ENCODE measurements at regions of chr13 and their contacts with region 1.

Region 1: GRCh38 chr13:26985285-26985878 is 186.2 kb downstream of the USP12 start:
- DNase-seq: peak; percentile 82
- H3K4me3 ChIP-seq: no peak overlapping the region
- H3K27ac ChIP-seq: peak overlapping the region; percentile 87 to 93 (median 90)
- H3K4me1 ChIP-seq: peaks cover 18 to 48% (median 33%) of the 10 kb centered on the region in 4 donors
- H3K27me3 ChIP-seq: no peaks in the 10 kb centered on the region
- CTCF ChIP-seq: peak; percentile 76 to 95 (median 78)
- EP300 ChIP-seq: no peak
- POLR2A ChIP-seq: no peak

Region 2: DNA sequence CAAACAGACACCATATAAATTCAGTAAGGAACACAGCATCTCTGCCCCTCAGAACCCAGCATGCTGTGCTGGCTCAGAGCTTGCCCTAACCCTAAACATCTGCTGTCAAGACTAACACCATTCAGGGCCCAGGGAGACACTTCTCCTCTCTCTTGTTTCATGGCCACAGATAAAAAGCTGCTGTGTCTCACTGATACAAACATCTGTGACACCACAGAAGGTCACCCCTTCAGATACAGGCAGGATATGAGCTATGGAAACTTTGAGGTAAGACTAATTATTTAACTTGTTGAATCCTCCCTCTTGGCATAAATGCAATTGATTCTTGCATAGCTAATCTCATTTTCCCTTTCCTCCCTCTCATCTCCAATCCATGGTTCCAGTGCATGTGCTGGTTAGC is 163.2 kb before region 1 on chr13:
- in situ Hi-C with region 1: no loop called
- intact Hi-C with region 1: no loop called
- DNase-seq: no peak
- H3K4me3 ChIP-seq: no peak overlapping the region
- H3K27ac ChIP-seq: no peak overlapping the region
- H3K4me1 ChIP-seq: no peaks in the 10 kb centered on the region
- H3K27me3 ChIP-seq: no peaks in the 10 kb centered on the region
- CTCF ChIP-seq: no peak
- EP300 ChIP-seq: no peak
- POLR2A ChIP-seq: no peak

Region 3: DNA sequence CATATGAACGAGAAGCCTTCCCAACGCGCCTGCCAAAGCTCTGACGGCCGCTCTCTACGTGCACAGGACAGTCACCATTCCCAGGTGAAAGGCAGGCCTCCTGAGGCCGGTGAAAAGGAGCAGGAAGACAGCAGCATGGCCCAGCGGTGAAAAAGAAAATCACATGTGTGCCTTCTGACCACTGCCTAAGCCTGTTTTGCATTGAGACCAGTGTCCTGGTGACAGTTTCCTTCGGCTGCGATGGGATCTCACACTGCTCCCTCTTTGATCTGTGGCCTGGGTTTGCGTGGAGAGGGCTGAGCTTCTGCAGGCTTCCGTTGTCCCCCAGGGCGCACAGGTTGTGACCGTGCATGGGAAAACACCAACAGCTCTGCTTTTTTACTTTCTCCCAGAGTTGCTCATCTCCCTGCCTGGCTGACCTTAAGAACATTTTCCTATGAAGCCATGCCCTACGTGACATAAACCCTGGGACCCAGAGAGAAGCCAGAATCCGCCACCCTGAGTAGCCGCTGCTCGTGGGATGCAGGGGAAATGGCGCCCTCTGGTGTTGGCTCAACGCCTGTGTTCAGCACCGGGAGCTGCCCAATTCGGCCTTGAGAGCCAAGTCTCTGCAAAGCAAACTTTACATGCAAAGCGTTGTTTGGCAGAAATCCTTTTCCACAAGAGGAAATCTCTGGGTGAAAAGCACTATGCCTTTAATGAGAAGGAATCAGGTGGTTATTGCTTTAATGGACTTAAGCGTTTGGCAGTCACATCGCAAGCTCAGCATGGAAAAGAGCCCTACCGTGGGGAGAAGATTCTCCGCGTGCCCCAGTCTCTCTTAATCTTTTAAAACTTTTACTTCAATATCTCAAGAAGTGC is 112.6 kb before region 1 on chr13:
- in situ Hi-C with region 1: no loop called
- intact Hi-C with region 1: no loop called
- DNase-seq: peak; percentile 33
- H3K4me3 ChIP-seq: no peak overlapping the region
- H3K27ac ChIP-seq: no peak overlapping the region
- H3K4me1 ChIP-seq: no peaks in the 10 kb centered on the region
- H3K27me3 ChIP-seq: peaks cover 3% of the 10 kb centered on the region
- CTCF ChIP-seq: peak; percentile 38 to 65 (median 45)
- EP300 ChIP-seq: no peak
- POLR2A ChIP-seq: no peak

Region 4: DNA sequence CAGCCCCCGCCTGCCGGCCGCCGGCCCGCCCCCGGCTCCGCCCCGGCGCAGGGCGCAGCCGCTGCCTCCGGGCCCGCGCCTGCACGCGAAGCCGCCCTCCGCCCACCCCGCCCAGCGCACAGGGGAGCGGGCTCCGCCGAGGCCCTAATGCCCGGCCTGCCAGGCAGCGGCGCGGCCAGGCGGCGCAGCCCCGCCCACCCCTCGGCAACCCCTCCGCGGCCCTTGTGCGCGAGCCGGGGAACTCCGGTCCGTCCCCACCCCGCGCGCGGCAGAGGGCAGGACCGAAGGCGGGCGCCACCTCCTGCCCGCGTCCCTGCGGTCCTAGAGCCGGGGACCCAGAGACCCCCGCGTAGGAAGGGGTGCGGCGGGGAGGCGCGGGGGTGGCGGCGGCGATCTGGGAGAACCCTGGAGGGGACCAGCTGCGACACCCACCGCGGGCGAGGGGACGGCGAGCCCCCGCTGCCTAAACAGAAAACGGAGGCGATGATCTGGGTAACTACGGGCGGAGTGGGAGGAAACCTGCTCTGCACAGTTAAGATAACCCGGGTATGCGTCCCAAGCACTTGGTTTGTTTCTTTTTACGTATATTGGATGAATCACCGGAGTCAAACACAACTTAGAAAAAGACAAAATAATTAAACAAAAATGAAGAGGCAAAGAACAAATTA is 186.6 kb after region 1 on chr13:
- in situ Hi-C with region 1: loop called in 1 of 4 experiments (anchors 25 kb)
- intact Hi-C with region 1: no loop called
- DNase-seq: peak; percentile 96
- H3K4me3 ChIP-seq: peak overlapping the region; percentile 72 to 92 (median 80)
- H3K27ac ChIP-seq: peak overlapping the region; percentile 93 to 97 (median 96)
- H3K4me1 ChIP-seq: peaks cover 22 to 46% (median 32%) of the 10 kb centered on the region in 4 donors
- H3K27me3 ChIP-seq: no peaks in the 10 kb centered on the region
- CTCF ChIP-seq: peak in 1 of 5 experiments; percentile 10
- EP300 ChIP-seq: no peak
- POLR2A ChIP-seq: peak; percentile 26

Region 5: DNA sequence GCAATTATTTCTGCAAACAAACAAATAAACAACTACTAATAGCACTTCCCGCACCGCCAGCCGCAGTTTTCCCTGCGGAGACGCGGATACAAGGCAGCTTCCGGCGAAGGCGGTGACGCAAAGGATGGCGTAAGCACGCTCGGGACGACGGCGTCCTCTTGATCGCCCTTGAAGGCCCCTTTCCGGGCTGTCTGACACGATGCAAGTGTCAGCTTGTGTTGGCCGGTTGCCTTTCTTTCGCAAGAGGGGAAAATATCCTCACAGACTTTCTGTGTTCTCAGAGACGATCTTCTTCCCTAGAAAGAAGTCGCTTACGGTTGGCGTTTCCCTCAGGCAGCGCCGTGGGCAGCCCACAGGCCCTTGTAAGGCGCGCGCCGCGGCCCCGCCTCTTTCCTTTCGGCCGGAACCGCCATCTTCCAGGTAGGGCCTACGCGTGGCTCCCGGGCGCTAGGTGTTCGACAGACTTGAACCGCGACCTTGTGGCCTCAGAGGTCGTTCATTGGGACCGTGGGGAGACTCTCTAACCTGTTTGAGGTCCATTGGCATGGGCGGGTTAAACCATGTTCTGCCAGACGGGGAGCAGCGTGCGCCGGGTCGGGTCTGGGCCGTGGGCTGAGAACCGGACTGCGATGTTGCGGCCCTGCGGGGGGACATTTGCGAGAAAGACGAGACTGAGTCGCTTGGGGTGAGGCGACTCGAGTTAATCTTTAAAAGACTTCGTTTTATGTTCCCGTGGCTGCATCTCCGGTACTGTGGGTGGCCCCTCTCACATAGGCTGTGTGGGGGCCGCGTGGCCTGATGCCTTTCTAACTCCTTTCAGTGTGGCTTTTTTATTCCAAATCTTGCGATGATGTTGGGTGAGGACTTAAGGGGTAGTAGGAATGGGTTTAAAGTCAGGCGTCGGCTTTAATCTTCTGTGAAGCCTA is 266.0 kb after region 1 on chr13 and contains the start of gene RPL21:
- in situ Hi-C with region 1: loop called in 1 of 4 experiments (anchors 25 kb)
- intact Hi-C with region 1: loop called (anchors 5 kb)
- DNase-seq: peak; percentile 97
- H3K4me3 ChIP-seq: peak within 1 kb of the TSS; percentile 54 to 91 (median 80)
- H3K27ac ChIP-seq: peak within 1 kb of the TSS; percentile 93 to 98 (median 95)
- H3K4me1 ChIP-seq: peaks cover 18 to 38% (median 20%) of the 10 kb centered on the region in 4 donors
- H3K27me3 ChIP-seq: no peaks in the 10 kb centered on the region
- CTCF ChIP-seq: no peak
- EP300 ChIP-seq: peak; percentile 65
- POLR2A ChIP-seq: peak; percentile 93
- total RNA-seq, gene RPL21: 71.8 to 702 (median 370) TPM

Region 6: DNA sequence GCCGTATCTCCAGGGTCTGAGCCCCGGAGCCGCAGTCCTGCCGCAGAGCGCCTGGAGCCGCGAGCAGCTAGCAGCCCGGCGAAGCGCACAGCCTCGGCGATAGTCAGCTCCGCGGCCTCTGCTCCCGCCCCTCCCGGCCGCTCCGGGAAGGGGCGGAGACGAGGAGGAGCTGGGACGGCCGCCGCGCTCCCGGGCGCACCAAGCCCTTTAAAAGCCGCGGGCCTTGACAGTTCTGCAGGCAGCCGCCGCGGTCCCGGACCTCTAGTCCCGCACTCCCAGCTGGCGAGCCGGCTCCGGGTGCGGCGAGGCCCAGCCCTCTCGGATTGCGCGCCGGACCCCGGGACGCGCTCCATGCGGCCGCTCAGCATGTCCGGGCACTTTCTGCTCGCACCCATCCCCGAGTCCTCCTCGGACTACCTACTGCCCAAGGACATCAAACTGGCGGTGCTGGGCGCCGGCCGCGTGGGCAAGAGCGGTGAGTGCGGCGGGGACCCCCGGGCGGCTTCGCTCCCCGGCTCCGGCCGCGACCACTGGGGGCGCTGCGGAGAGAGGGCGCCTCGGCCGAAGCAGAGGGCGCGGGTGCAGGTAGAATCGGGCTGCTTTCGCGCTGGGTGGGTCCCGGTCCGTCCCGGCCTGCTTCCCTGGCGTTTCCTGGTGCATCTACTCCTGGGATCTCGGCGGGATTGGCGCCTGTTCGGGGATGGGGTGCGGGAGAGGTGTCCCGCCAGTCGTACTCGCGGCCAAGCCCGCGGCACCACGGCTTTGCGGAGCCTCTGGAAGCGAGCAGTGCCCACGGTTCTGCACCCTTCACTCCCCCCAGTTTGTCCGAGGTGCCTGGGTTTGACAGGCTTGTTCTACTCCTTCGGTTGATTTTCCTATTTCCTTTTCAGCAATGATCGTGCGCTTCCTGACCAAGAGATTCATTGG is 285.5 kb after region 1 on chr13 and contains the start of gene RASL11A:
- in situ Hi-C with region 1: loop called in 2 of 4 experiments (anchors 10 to 25 kb)
- intact Hi-C with region 1: loop called (anchors 5 kb)
- DNase-seq: peak; percentile 90
- H3K4me3 ChIP-seq: peak within 1 kb of the TSS; percentile 64 to 82 (median 66)
- H3K27ac ChIP-seq: peak within 1 kb of the TSS; percentile 91 to 97 (median 94)
- H3K4me1 ChIP-seq: peaks cover 7 to 37% (median 14%) of the 10 kb centered on the region in 4 donors
- H3K27me3 ChIP-seq: no peaks in the 10 kb centered on the region
- CTCF ChIP-seq: peak; percentile 93 to 99 (median 96)
- EP300 ChIP-seq: no peak
- POLR2A ChIP-seq: peak; percentile 95
- total RNA-seq, gene RASL11A: 18.7 to 37.7 (median 28.9) TPM

Region 7: DNA sequence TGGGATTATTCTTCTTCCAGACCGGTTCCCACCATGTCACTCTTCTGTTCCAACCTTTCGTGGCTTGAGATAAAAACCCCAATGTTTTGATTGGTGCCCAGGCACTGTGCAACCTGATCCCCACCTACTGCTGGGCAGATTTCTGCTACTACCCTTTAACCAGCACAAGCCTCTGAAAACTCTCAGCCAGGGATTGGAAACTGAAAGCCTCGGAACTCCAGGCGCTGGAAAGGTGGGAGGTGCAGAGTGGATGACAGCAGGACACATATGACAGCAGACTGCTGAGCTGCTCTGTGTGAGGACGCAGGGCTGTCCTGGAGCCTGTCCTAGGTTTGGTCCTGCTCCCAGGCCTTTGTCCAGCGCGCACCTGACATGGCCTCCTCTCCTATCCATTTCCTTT is 370.5 kb after region 1 on chr13:
- in situ Hi-C with region 1: loop called (anchors 5 to 10 kb)
- intact Hi-C with region 1: loop called (anchors 2 kb)
- DNase-seq: no peak
- H3K4me3 ChIP-seq: no peak overlapping the region
- H3K27ac ChIP-seq: no peak overlapping the region
- H3K4me1 ChIP-seq: peaks cover 0 to 21% (median 4%) of the 10 kb centered on the region in 4 donors
- H3K27me3 ChIP-seq: peaks cover 5% of the 10 kb centered on the region
- CTCF ChIP-seq: no peak
- EP300 ChIP-seq: no peak
- POLR2A ChIP-seq: no peak

Region 8: GRCh38 chr13:27362064-27362883 is 376.9 kb after region 1 on chr13:
- in situ Hi-C with region 1: loop called (anchors 5 to 10 kb)
- intact Hi-C with region 1: loop called (anchors 2 kb)
- DNase-seq: peak; percentile 92
- H3K4me3 ChIP-seq: peak overlapping the region; percentile 28 to 50 (median 32)
- H3K27ac ChIP-seq: peak overlapping the region; percentile 11 to 52 (median 21)
- H3K4me1 ChIP-seq: peaks cover 0 to 17% (median 9%) of the 10 kb centered on the region in 4 donors
- H3K27me3 ChIP-seq: peaks cover 5% of the 10 kb centered on the region
- CTCF ChIP-seq: peak; percentile 90 to 96 (median 94)
- EP300 ChIP-seq: no peak
- POLR2A ChIP-seq: no peak

Region 9: DNA sequence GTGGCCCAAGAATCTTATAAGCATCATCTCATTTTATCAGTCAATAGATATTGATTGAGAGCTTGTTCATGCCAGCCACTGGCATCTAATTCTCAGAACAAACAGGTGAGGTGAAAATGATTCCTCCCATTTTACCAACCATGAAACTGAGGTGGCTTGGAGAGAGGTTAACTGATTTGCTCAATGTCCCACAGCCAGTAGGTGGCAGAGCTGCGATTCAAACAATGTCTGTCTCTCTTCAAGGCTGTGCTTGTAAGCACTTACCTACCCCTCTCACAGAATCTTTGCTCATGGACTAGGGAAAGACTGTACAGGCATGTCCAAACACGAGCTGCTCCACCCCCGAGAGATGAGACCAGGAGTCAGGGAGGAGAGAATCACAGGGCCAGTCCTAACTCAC is 785.4 kb after region 1 on chr13:
- in situ Hi-C with region 1: no loop called
- intact Hi-C with region 1: no loop called
- DNase-seq: peak; percentile 36
- H3K4me3 ChIP-seq: no peak overlapping the region
- H3K27ac ChIP-seq: no peak overlapping the region
- H3K4me1 ChIP-seq: no peaks in the 10 kb centered on the region
- H3K27me3 ChIP-seq: peaks cover 24% of the 10 kb centered on the region
- CTCF ChIP-seq: peak in 3 of 5 experiments; percentile 26 to 30 (median 30)
- EP300 ChIP-seq: no peak
- POLR2A ChIP-seq: no peak

Region 10: DNA sequence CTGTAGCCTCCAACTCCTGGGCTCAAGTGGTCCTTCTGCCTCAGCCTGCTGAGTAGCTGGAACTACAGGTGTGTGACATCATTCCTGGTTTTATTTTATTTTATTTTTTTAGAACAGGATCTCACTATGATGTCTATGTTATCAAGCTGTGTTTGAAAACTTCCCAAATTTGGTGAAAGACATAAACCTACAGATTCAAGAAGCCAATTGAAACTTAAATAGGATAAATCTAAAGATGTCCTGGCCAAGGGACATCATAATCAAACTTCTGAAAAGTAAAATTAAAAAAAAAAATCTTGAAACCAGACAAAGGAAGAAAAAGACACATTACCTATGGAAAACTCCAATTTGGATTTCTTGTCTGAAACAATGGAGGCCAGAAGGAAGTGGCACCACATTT is 911.3 kb after region 1 on chr13:
- in situ Hi-C with region 1: no loop called
- intact Hi-C with region 1: no loop called
- DNase-seq: no peak
- H3K4me3 ChIP-seq: no peak overlapping the region
- H3K27ac ChIP-seq: no peak overlapping the region
- H3K4me1 ChIP-seq: no peaks in the 10 kb centered on the region
- H3K27me3 ChIP-seq: peaks cover 86% of the 10 kb centered on the region
- CTCF ChIP-seq: no peak
- EP300 ChIP-seq: no peak
- POLR2A ChIP-seq: no peak

Region 11: DNA sequence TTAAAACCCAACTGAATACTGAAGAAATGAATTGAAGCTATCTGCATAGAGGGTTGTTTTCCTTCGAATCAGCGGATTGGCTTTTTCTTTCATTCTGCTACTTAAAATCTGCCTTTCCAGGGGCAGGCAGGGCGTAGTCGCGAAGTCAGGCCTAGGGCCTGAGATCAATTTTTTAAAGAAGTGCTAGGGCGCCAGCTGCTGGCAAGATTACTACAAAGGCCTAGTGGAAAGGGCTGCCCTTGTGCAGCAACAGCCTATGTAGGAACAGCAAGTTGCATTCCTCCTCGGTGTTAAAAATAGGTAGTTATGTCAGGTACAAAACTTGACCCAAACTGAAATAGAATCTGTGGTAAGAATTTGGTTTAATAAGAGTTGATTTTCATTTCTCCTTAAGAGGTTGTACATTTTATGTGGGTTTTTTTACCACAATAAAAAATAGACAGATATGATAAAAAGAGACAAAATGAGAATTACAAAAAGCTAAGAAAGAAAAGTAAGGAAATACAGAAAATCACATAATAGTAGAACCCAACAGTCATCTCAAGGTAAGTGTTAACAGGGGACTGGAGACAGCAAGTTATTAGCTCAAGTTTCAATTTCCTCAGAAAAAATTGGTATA is 1012.6 kb after region 1 on chr13:
- in situ Hi-C with region 1: loop called in 1 of 4 experiments (anchors 25 kb)
- intact Hi-C with region 1: no loop called
- DNase-seq: peak; percentile 65
- H3K4me3 ChIP-seq: no peak overlapping the region
- H3K27ac ChIP-seq: no peak overlapping the region
- H3K4me1 ChIP-seq: no peaks in the 10 kb centered on the region
- H3K27me3 ChIP-seq: no peaks in the 10 kb centered on the region
- CTCF ChIP-seq: peak; percentile 18 to 46 (median 39)
- EP300 ChIP-seq: no peak
- POLR2A ChIP-seq: no peak